ENCODE measurements at regions of chr22 and their contacts with region 1.

Region 1: GRCh38 chr22:37193629-37194191 is 5.7 kb upstream of the C1QTNF6 start:
- DNase-seq: no peak
- ATAC-seq: peak; percentile 34
- H3K4me3 ChIP-seq: no peak overlapping the region
- H3K27ac ChIP-seq: peak overlapping the region; percentile 49
- H3K4me1 ChIP-seq: peaks cover 18% of the 10 kb centered on the region
- H3K27me3 ChIP-seq: no peaks in the 10 kb centered on the region
- CTCF ChIP-seq: no peak
- EP300 ChIP-seq: peak in 1 of 2 experiments; percentile 57; a peak in 1 of 4 replicates
- POLR2A ChIP-seq: no peak
- RAD21 ChIP-seq: no peak

Region 2: GRCh38 chr22:37166675-37167066 is 27.0 kb before region 1 on chr22:
- CTCF ChIA-PET with region 1: interaction called, 53 read pairs
- POLR2A ChIA-PET with region 1: interaction called, 16 read pairs
- RAD21 ChIA-PET with region 1: interaction called, 99 read pairs
- SMC1A ChIA-PET with region 1: interaction called, 64 read pairs
- in situ Hi-C with region 1: no loop called
- intact Hi-C with region 1: loop called (anchors 1 kb)
- DNase-seq: no peak
- ATAC-seq: peak; percentile 21
- H3K4me3 ChIP-seq: no peak overlapping the region; the same call in 1 of the 2 replicates
- H3K27ac ChIP-seq: no peak overlapping the region; the same call in 1 of the 2 replicates
- H3K4me1 ChIP-seq: peaks cover 62% of the 10 kb centered on the region
- H3K27me3 ChIP-seq: no peaks in the 10 kb centered on the region
- CTCF ChIP-seq: peak in 2 of 3 experiments; percentile 87 to 92; a peak in 5 of 6 replicates
- EP300 ChIP-seq: no peak
- POLR2A ChIP-seq: no peak
- RAD21 ChIP-seq: peak; percentile 77

Region 3: DNA sequence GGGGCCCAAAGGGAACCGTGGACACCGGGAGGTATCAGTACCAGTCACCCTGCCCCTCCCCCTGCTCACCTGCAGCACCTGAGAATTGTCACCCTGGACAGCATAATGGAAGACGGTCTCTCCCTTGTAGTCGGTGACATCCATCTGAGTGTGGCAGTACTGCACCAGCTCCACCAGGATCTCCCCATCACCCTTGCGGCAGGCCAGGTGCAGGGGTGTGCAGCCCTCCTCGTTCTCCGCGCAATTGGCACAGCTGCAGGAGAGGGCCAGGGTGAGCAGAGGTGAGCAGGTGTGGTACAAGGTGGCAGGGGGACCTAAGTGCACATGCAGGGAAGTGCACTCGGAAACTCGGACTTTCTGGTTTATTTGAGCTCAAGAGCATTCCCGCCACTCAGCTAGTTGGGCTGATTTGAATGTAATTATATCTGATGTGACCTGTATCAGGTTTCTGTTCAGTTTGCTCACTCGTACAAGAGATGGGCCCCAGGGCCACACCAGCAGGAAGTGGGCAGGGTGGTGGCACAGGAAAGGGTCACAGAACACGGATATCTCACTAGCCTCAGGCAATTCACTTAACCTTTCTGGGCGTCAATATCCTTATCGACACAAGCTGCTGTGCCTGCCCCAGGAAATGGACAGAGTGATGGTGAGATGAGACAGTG is 949.5 kb after region 1 on chr22:
- CTCF ChIA-PET with region 1: no interaction called
- POLR2A ChIA-PET with region 1: no interaction called
- RAD21 ChIA-PET with region 1: no interaction called
- SMC1A ChIA-PET with region 1: no interaction called
- in situ Hi-C with region 1: no loop called
- intact Hi-C with region 1: no loop called
- DNase-seq: no peak
- ATAC-seq: no peak
- H3K4me3 ChIP-seq: no peak overlapping the region
- H3K27ac ChIP-seq: no peak overlapping the region
- H3K4me1 ChIP-seq: no peaks in the 10 kb centered on the region; the same call in 1 of the 2 replicates
- H3K27me3 ChIP-seq: no peaks in the 10 kb centered on the region
- CTCF ChIP-seq: no peak
- EP300 ChIP-seq: no peak
- POLR2A ChIP-seq: no peak
- RAD21 ChIP-seq: no peak